ENCODE measurements at regions of chr6 and their contacts with region 1.

Region 1: DNA sequence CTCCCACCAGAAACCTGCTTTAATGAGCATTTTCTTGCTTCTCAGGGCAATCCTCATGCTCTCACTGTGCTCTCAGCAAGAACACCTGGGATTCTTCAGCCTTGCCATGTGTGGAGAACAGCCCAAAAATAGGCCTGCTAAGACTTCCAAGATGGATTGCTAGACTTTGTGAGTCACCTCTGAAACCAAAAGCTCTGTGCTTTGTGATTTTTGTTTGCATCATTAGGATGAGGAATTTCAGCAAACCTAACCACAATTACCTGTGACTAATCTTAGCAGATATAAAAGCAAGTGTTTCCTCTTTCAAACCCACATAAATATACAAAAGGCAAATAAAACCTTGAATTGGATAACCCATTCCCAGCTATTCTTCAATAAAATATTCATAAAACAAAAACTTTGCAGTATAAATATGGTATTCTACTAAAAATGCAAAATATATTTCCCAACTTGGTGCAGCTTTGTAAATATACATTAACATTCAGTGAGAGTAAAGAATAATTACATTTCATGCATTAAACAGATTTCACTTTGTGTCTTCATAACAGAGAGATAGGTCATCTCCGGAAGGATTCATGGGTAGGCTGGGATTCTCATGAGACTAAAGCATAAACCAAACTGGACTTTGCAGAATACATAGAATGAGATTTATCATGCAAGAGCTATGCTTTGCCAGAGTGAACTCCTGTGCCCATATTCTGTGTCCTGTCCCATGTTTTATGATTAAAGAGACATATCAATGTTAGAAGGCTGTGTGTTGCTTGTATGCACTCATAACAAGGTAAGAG is 33.5 kb downstream of the TPBG start:
- DNase-seq: peak; percentile 96
- H3K4me3 Mint-ChIP-seq: peak overlapping the region; percentile 67
- H3K27ac Mint-ChIP-seq: peak overlapping the region; percentile 70
- H3K4me1 Mint-ChIP-seq: peaks cover 45% of the 10 kb centered on the region
- H3K27me3 Mint-ChIP-seq: no peaks in the 10 kb centered on the region
- CTCF ChIP-seq: no peak

Region 2: DNA sequence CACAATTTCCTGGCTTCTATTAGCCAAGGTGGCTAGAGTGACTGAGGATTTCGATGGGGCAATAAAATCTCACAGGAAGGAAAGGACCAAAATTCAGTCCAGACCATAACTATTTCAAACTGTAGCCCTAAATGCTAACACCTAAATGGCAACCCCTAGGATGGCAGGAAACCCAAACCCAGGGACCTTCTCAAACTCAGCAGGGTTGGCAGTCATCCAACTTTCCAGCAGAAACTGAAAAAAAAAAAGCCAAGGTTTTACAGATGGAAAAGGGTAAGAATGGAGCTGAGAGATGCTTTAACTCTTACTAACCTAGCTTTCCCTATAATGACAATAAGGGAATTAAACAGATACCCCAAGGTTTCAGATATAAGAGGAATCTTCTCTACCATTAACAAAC is 160.1 kb before region 1 on chr6:
- CTCF ChIA-PET with region 1: no interaction called
- POLR2A ChIA-PET with region 1: no interaction called
- intact Hi-C with region 1: no loop called
- DNase-seq: peak; percentile 7
- H3K4me3 Mint-ChIP-seq: no peak overlapping the region
- H3K27ac Mint-ChIP-seq: peak overlapping the region; percentile 81
- H3K4me1 Mint-ChIP-seq: peaks cover 13% of the 10 kb centered on the region
- H3K27me3 Mint-ChIP-seq: no peaks in the 10 kb centered on the region
- CTCF ChIP-seq: no peak

Region 3: GRCh38 chr6:82381278-82381677 is 15.9 kb before region 1 on chr6:
- CTCF ChIA-PET with region 1: interaction called, 4 read pairs
- POLR2A ChIA-PET with region 1: interaction called, 54 read pairs
- intact Hi-C with region 1: no loop called
- DNase-seq: no peak
- H3K4me3 Mint-ChIP-seq: no peak overlapping the region
- H3K27ac Mint-ChIP-seq: no peak overlapping the region
- H3K4me1 Mint-ChIP-seq: peaks cover 19% of the 10 kb centered on the region
- H3K27me3 Mint-ChIP-seq: no peaks in the 10 kb centered on the region
- CTCF ChIP-seq: no peak

Region 4: GRCh38 chr6:82408952-82409431 is 11.8 kb after region 1 on chr6:
- CTCF ChIA-PET with region 1: interaction called, 5 read pairs
- POLR2A ChIA-PET with region 1: interaction called, 43 read pairs
- intact Hi-C with region 1: loop called (anchors 1 kb)
- DNase-seq: peak; percentile 90
- H3K4me3 Mint-ChIP-seq: peak overlapping the region; percentile 22
- H3K27ac Mint-ChIP-seq: peak overlapping the region; percentile 95
- H3K4me1 Mint-ChIP-seq: peaks cover 47% of the 10 kb centered on the region
- H3K27me3 Mint-ChIP-seq: no peaks in the 10 kb centered on the region
- CTCF ChIP-seq: no peak

Measured in MCF 10A (cell line).